ENCODE measurements at regions of chr1 and their contacts with region 1.

Region 1: DNA sequence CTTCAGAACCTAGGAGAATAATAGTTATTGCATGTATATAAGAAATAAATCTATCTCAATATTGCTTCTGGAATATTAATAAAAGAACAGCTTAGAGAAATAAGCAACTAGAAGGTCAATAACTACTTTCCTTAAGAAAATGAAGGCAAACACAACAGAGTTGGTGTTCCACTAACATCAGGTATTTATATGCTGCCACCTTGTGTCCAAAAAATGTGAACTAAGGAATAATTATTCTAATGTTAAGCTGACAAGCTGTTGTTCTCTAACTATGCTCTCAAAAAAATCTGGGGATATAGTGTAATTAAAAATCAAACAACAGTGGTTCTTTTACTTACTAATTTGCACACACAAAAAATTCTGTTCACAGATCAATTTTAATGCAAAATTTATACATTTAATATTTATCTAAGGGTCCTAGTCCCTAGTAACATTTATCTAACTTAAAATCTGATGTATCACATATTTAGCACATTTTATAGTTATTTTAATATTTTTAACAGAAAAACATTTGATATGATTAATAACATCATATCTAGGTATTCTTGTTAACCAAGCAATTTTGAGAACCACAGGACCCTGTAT is 39.6 kb downstream of the UCHL5 start:
- DNase-seq: peak; percentile 51
- H3K4me3 ChIP-seq: no peak overlapping the region
- CTCF ChIP-seq: peak; percentile 18

Region 2: GRCh38 chr1:192477630-192478029 is 541.9 kb before region 1 on chr1:
- in situ Hi-C with region 1: loop called (anchors 10 kb)
- DNase-seq: no peak
- H3K4me3 ChIP-seq: no peak overlapping the region
- CTCF ChIP-seq: peak; percentile 9

Region 3: GRCh38 chr1:192580351-192580962 is 439.1 kb before region 1 on chr1:
- in situ Hi-C with region 1: loop called (anchors 25 kb)
- DNase-seq: peak; percentile 55
- H3K4me3 ChIP-seq: no peak overlapping the region
- CTCF ChIP-seq: peak; percentile 71

Region 4: DNA sequence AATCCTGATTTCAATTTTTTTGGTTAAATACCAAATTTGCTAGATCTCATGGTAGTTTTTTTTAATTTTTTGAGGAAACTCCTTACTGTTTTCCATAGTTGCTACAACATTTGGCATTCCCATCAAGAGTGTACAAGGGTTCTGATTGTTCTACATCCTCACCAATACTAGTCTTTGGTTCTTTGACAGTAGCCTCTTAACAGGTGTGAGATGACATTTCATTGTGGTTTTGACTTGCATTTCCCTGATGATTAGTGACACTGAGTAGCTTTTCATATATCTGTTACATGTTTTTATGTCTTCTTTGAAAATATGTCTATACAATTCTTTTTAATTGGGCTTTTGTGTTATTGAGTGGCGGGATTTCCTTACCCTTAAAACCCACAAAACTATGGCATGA is 404.5 kb before region 1 on chr1:
- in situ Hi-C with region 1: no loop called
- DNase-seq: no peak
- H3K4me3 ChIP-seq: no peak overlapping the region
- CTCF ChIP-seq: no peak

Region 5: DNA sequence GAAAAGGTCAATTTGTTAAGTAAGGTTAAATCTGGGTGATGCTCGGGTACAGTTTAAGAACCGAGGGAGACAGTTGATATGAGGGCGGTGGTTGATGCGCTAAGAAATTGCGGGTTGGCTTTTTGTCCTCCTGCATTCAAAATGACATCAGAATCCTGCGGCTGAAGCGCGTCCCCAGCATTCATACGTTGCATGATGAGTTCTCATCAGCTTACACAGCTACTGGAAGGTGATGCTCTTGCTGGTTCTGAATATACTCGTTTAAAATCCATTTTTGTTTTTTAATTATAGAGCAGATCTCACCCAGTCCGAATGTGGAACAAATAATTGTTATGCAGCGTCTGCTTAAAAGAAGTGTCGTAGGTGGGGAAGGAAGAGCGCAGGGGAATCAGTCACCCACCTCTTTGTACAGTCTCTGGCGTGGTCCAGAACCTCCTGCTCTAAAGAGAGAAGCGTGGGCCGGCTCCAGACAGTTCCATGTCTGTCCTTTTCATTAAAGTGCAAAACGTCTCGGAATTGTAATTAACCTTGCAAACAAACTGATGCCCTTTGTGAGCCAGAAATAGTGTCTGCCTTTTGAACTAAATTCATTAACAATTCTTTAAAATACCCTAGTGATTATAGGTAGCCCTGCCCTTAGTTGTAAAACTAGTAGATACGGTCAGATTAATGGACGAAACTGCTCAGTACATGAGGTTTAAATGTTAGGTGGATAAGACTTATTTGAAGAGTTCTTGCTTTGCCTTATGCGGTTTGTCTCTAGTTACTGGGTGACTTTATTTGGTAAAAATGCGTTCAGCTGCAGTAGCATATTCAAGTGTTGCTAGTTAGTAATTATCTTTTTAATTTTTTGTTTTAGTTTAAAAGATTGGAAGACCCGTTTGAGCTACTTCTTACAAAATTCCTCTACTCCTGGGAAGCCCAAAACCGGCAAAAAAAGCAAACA is 210.0 kb before region 1 on chr1:
- in situ Hi-C with region 1: loop called (anchors 10 kb)
- DNase-seq: no peak
- H3K4me3 ChIP-seq: peak overlapping the region; percentile 87
- CTCF ChIP-seq: no peak

Region 6: DNA sequence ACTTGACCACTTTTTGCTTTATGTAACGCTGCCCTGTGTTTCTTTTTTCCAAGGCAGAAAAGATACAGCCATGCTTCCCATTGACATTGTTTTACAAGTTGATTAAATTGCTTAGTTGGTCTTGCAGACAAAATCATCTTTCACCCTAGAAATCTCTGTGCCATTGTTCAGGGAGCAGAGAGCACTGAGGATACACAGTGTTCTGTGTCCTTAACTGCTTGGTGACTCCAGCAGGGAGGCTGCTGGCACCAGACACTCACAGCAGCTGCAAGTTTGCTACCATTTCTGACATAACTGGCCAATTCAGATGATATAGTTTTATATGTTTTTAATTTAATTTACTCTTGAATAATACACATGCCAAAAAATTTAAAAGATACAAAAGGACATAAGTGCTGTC is 92.0 kb before region 1 on chr1:
- in situ Hi-C with region 1: no loop called
- DNase-seq: no peak
- H3K4me3 ChIP-seq: no peak overlapping the region
- CTCF ChIP-seq: no peak

Measured in astrocyte of the cerebellum (primary cell).